Adrenal gland (tissue), 19 donors: ENCODE measurements at regions of chr5 and their contacts with region 1.

Region 1: DNA sequence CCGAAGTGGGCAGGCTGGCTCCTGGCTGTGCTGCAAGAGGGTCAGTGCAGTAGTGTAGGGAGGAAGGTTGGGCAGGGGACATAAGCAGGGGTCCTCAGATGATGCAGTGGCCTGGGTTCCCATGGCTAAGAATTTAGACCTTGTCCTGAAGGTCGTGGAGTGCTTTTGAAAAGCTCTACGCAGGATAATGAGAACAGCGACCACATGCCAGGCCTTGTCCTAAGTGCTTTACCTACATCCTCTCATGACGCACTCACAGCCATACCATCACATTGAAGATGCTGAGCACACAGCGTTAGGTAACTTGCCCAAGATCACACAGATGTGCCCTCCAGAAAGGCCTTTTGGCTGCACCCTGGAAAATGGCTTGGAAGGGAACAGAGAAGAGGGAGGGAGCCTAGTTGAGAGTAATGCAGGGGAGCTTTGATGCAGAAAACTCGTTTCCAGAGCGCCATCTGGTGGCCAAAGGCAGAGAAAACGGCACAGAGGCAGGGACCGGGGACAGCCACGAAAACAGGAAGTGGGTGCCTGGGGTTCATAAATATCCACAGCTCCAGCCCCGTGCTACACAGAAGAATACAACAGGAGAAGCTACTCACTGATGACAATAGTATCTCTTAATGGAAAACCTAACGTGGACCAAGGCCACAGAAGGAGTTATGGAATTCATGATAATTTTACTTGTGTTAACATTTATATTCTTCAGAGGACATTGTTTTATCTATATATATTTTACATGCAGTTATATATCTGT is 2.6 kb upstream of the PCDH12 start:
- DNase-seq: peak; percentile 86 to 96 (median 88)
- H3K4me3 ChIP-seq: no peak overlapping the region
- H3K27ac ChIP-seq: no peak overlapping the region
- H3K4me1 ChIP-seq: peaks cover 0 to 12% of the 10 kb centered on the region in 2 donors
- H3K27me3 ChIP-seq: no peaks in the 10 kb centered on the region
- CTCF ChIP-seq: peak; percentile 76 to 92 (median 88)
- POLR2A ChIP-seq: no peak

Region 2: GRCh38 chr5:141681695-141682641 is 278.7 kb before region 1 on chr5 and contains the start of gene ARAP3:
- intact Hi-C with region 1: loop called in 1 of 2 experiments (anchors 5 kb)
- DNase-seq: peak; percentile 88 to 97 (median 94)
- H3K4me3 ChIP-seq: peak within 1 kb of the TSS in 2 of 4 donors; percentile 16 to 76
- H3K27ac ChIP-seq: peak within 1 kb of the TSS in 4 of 5 donors; percentile 75 to 97 (median 82)
- H3K4me1 ChIP-seq: peaks cover 10 to 15% of the 10 kb centered on the region in 2 donors
- H3K27me3 ChIP-seq: no peaks in the 10 kb centered on the region
- CTCF ChIP-seq: no peak
- POLR2A ChIP-seq: peak in 1 of 2 donors; percentile 36
- total RNA-seq, gene ARAP3: 3.0 to 16.1 (median 10.1) TPM

Region 3: DNA sequence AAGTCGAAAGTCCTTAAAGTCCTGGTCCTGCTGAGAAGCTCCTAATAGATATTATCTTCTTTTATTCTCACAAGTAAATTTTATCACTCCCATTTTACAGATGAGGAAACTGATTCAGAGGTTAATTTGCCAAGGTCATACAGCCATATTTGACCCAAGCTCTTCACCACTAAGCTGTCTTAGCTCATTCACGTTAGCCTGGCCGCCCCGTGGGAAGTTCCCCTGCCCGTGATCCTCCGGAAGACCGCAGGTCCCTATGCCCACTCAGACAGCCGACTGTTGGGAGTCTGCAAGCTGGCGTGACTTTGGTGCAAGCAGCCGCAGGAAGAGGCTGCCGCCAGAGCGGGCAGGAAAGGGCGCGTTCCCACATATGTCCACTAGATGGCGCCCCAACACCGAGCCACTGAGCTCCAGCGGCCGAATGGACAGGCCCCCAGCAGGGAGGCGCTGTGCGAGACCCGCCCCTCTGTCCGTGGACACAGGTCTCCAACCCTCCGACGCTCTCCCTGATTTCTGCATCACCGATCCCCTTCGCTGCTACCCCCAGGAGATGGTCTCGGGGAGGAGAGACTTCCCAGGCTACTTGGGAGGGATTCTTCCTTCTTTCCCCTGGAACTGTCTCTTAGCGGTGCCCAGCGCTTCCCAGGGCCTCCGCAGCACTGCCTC is 268.6 kb before region 1 on chr5:
- intact Hi-C with region 1: loop called in 1 of 2 experiments (anchors 2 kb)
- DNase-seq: peak; percentile 74 to 94 (median 86)
- H3K4me3 ChIP-seq: peak overlapping the region in 1 of 4 donors; percentile 25
- H3K27ac ChIP-seq: no peak overlapping the region
- H3K4me1 ChIP-seq: peaks cover 0 to 4% of the 10 kb centered on the region in 2 donors
- H3K27me3 ChIP-seq: peaks cover under 1% of the 10 kb centered on the region
- CTCF ChIP-seq: peak; percentile 95 to 99 (median 98)
- POLR2A ChIP-seq: no peak

Region 4: DNA sequence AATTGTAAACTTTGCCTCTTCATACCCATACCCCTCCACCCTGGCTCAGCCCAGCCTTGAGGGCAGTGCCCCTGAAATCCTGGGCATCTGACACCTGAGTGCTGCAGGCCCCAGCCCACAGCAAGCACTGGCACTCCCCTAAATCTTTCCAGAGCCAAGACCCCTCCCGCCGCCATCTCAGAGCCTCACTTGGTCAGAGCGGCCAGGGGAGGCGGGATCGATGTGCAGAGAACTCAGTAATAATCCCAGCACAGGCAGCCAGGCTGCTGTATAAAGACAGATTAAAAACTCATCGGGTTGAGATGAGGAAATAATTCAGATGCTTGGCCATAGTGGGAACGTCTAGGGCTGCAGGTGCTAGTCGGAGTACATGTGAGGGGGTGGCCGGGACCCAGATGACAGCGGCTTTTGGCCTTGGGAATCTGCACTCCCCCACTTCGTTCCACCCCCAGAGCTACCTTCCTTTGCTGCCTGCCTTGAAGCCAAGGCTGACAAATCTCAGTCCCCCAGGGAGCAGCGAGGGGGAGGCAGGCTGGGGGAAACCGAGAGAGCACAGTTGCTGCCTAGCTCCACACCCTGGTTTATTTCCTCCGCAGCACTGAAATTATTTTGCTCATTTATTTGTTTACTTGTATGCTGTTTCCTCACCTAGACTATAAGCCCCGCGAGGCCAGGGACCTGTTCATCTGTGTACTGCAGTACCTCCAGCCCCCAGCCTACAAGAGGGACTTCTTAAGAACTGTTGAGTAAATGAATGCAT is 259.1 kb before region 1 on chr5:
- intact Hi-C with region 1: loop called in 1 of 2 experiments (anchors 5 kb)
- DNase-seq: no peak
- H3K4me3 ChIP-seq: no peak overlapping the region
- H3K27ac ChIP-seq: no peak overlapping the region
- H3K4me1 ChIP-seq: peaks cover 0 to 11% of the 10 kb centered on the region in 2 donors
- H3K27me3 ChIP-seq: peaks cover 28% of the 10 kb centered on the region
- CTCF ChIP-seq: no peak
- POLR2A ChIP-seq: no peak

Region 5: DNA sequence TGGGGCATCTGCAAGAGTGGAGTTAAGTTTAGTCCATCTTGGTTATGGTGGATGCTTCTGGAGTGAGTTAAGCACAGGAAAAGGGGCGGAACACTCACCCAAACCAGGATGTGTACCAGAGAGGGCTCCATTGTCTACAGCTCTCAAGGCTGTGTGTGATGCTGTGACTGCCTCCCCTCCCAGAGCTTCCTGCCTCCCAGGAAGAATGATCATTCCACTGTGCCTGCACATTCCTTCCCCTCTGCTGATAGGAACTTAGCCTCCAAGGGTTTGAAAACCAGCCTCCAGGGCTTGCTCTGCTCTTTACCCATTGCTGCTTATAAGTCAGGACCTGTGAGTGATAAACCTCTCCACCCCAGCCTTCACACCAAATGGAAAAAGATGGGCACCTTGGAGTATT is 524.2 kb after region 1 on chr5:
- intact Hi-C with region 1: no loop called
- DNase-seq: no peak
- H3K4me3 ChIP-seq: no peak overlapping the region
- H3K27ac ChIP-seq: no peak overlapping the region
- H3K4me1 ChIP-seq: no peaks in the 10 kb centered on the region
- H3K27me3 ChIP-seq: no peaks in the 10 kb centered on the region
- CTCF ChIP-seq: no peak
- POLR2A ChIP-seq: no peak